ENCODE measurements at regions of chr9 and their contacts with region 1.

Region 1: GRCh38 chr9:91422758-91423711 is 597 bp downstream of the NFIL3 start:
- DNase-seq: peak; percentile 73 to 87 (median 82)
- H3K4me3 ChIP-seq: peak overlapping the region; percentile 51 to 98 (median 79)
- H3K27ac ChIP-seq: peak overlapping the region in 1 of 2 experiments; percentile 60
- H3K4me1 ChIP-seq: peaks cover 28 to 48% (median 42%) of the 10 kb centered on the region in 4 experiments
- H3K27me3 ChIP-seq: peaks cover 11 to 58% (median 16%) of the 10 kb centered on the region in 5 experiments

Region 2: DNA sequence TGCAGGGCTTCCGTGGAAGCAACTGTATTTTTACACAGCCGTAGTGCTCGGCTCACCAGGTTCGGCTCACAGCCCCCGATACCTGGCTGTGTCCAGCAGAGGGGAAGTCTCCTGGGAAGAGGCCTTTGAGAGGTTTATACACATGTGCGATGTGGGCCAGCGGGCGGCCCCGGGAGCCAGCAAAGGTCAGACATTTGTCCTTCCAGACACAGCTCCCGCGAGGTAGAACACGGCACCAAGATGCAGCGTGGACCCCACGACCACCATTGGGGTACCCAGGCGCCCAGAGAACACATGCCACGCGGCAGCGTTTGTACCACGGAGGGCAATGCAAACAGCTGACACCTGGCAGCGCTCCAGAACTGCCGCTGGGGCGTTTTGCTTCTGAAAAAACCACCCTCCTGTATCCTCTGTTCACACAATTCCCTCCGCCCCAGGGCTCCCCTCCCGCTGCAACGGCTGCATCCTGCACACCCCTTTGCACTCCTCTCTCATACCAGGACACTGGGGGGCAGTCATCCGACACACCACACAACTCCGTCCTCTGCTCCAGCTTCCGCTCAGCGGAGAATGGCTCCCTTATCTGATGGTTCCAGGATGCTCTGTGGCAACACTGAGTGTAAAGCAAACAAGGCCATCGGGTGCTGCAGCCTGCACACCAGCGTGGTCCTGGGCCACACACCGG is 386.1 kb before region 1 on chr9:
- CTCF ChIA-PET with region 1: interaction called, 16 read pairs
- POLR2A ChIA-PET with region 1: interaction called, 5 read pairs
- DNase-seq: peak; percentile 93 to 98 (median 98)
- H3K4me3 ChIP-seq: peak overlapping the region in 3 of 7 experiments; percentile 19 to 46 (median 19)
- H3K27ac ChIP-seq: no peak overlapping the region
- H3K4me1 ChIP-seq: peaks cover 0 to 17% (median 13%) of the 10 kb centered on the region in 4 experiments
- H3K27me3 ChIP-seq: peaks cover 0 to 6% (median 0%) of the 10 kb centered on the region in 5 experiments

Region 3: DNA sequence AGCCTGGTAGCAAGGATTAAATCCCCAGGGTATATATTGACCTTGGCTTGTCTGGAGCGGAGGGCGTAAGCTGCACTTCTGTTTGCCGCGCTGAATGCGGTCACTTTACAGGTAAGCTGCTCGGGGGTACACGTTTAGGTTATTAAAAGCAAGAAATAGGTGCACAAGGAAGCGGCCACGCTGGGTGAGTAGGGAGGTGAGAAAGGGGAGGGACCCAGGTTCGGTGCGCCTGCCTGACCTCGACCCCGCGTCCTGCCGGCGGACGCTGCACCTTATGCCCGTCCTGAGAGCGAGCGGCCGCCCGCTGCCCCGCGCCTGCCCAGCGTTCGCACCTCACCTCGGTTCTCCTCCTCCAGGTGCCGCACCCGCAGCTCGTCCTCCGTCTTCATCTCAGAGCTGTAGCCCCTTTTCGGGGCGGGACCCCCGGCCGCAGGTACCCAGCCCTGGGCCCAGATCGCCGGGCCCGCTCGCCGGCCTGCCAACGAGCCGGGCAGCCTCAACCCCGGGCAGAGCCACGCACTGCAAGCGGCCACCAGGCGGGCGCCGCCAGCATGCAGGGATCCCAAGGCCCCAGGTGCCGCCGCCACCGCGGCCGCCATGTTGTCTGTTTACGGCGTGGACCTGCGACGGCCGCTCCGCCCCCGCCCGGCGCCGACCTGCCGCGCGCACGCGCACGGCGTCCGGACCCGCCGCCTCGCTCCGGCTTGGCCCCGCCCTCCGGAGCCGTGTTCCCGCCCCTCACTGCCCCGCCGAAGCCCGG is 61.6 kb before region 1 on chr9 and contains the start of gene AUH:
- CTCF ChIA-PET with region 1: interaction called, 12 read pairs
- POLR2A ChIA-PET with region 1: no interaction called
- DNase-seq: peak; percentile 83 to 90 (median 89)
- H3K4me3 ChIP-seq: peak within 1 kb of the TSS; percentile 79 to 97 (median 94)
- H3K27ac ChIP-seq: peak within 1 kb of the TSS; percentile 55 to 84
- H3K4me1 ChIP-seq: peaks cover 8 to 18% (median 11%) of the 10 kb centered on the region in 4 experiments
- H3K27me3 ChIP-seq: no peaks in the 10 kb centered on the region

Measured in common myeloid progenitor, CD34-positive (primary cell).